ENCODE measurements at regions of chr1 and their contacts with region 1.

Region 1: GRCh38 chr1:77143529-77144121 is 75.6 kb downstream of the PIGK start:
- DNase-seq: no peak

Region 2: DNA sequence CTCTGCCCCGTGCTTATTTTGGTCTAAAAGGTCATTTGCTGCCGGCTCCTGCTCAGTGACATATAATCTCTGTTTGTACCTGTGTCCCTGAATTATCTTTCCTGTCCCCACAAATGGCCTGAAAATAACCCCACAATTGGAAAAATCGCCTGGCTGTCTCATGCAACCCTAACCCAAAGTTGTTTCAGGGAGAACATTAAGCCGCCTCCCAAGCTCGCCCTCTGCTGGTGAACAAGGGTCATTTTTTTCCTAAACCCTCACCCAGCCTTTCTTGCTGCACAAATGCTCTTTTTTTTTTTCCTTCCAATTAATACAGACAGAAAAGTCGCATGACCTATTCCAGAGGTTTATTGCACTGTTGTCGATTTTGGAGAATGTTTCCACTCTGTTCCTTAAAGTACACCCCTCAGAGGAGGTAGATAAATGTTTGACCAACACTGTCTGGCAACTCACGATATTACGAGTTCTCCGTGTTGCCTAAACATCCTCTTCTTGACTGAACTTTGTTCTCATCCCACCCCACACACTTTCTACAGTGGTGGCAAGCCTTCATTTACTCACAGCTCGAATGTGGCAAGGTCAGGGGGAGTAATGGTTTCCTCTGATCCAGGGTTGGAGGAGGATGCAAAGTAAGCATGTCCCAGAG is 390.2 kb after region 1 on chr1:
- intact Hi-C with region 1: loop called in 1 of 2 experiments (anchors 5 kb)
- DNase-seq: no peak

Region 3: DNA sequence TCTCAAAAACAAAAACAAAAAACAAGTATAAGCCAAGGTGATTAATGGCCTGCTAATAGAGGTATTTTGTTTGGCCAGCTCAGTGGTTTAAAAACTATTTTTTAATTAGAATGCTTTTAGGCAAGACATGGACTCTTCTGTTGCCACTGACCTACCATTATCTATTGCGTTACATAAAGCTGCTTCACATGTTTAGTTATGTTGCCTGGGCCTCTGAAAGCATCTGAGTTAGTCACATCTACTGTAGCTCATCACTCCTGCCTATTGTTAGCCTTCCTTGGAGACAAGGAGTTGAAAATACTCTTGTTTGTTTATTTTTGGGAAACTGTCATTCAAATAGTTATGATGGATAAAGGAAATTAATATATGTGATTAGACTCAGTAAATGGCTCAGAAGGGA is 875.4 kb after region 1 on chr1:
- intact Hi-C with region 1: no loop called
- DNase-seq: no peak